IMR-90 (cell line): ENCODE measurements at regions of chr5 and their contacts with region 1.

Region 1: GRCh38 chr5:41869739-41870626 is at the start of gene OXCT1:
- DNase-seq: peak; percentile 80
- ATAC-seq: peak; percentile 91
- H3K4me3 ChIP-seq: peak within 1 kb of the TSS; percentile 95
- H3K27ac ChIP-seq: peak within 1 kb of the TSS; percentile 83
- H3K4me1 ChIP-seq: peaks cover 2% of the 10 kb centered on the region; the same call in 1 of the 2 replicates
- H3K27me3 ChIP-seq: no peaks in the 10 kb centered on the region
- CTCF ChIP-seq: no peak
- POLR2A ChIP-seq: peak; percentile 83
- RAD21 ChIP-seq: no peak
- total RNA-seq, gene OXCT1: 16.3 and 24.7 TPM in 2 replicates

Region 2: GRCh38 chr5:41903892-41904799 is 34.2 kb after region 1 on chr5 and contains the start of gene RIMOC1:
- CTCF ChIA-PET with region 1: no interaction called
- POLR2A ChIA-PET with region 1: no interaction called
- dilution Hi-C with region 1: no loop called
- in situ Hi-C with region 1: no loop called
- intact Hi-C with region 1: loop called (anchors 1 kb)
- DNase-seq: peak; percentile 100
- ATAC-seq: peak; percentile 99
- H3K4me3 ChIP-seq: peak within 1 kb of the TSS; percentile 87
- H3K27ac ChIP-seq: peak within 1 kb of the TSS; percentile 90
- H3K4me1 ChIP-seq: no peaks in the 10 kb centered on the region; the same call in 1 of the 2 replicates
- H3K27me3 ChIP-seq: no peaks in the 10 kb centered on the region
- CTCF ChIP-seq: no peak
- POLR2A ChIP-seq: peak; percentile 97
- RAD21 ChIP-seq: no peak
- total RNA-seq, gene RIMOC1: 4.1 and 10.3 TPM in 2 replicates

Region 3: DNA sequence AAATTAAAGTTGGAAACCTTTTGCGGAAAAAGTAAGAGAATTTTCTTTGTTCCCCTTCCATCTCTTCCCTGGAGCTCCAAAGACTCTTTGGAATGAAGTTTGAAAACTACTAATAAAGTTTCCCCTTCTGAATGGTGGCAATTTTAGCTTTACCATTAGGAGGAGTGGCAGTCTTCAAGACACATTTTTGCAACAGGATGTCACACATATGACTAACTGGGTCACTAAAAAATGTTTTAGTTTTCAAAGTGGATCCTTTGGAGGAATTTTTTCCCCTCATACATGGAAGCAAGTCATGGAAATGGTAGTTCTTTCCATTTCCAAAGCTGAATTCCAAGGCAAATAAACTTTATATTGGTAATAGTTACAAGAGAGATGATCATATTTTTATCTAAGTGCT is 70.7 kb after region 1 on chr5:
- CTCF ChIA-PET with region 1: no interaction called
- POLR2A ChIA-PET with region 1: no interaction called
- dilution Hi-C with region 1: no loop called
- in situ Hi-C with region 1: no loop called
- intact Hi-C with region 1: no loop called
- DNase-seq: no peak
- ATAC-seq: no peak
- H3K4me3 ChIP-seq: no peak overlapping the region
- H3K27ac ChIP-seq: no peak overlapping the region
- H3K4me1 ChIP-seq: no peaks in the 10 kb centered on the region
- H3K27me3 ChIP-seq: no peaks in the 10 kb centered on the region
- CTCF ChIP-seq: no peak
- POLR2A ChIP-seq: no peak
- RAD21 ChIP-seq: no peak

Region 4: GRCh38 chr5:42043400-42043799 is 173.4 kb after region 1 on chr5:
- CTCF ChIA-PET with region 1: no interaction called
- POLR2A ChIA-PET with region 1: no interaction called
- dilution Hi-C with region 1: no loop called
- in situ Hi-C with region 1: no loop called
- intact Hi-C with region 1: loop called (anchors 5 kb)
- DNase-seq: no peak
- ATAC-seq: no peak
- H3K4me3 ChIP-seq: no peak overlapping the region
- H3K27ac ChIP-seq: no peak overlapping the region
- H3K4me1 ChIP-seq: no peaks in the 10 kb centered on the region
- H3K27me3 ChIP-seq: no peaks in the 10 kb centered on the region
- CTCF ChIP-seq: no peak
- POLR2A ChIP-seq: no peak
- RAD21 ChIP-seq: no peak

Region 5: DNA sequence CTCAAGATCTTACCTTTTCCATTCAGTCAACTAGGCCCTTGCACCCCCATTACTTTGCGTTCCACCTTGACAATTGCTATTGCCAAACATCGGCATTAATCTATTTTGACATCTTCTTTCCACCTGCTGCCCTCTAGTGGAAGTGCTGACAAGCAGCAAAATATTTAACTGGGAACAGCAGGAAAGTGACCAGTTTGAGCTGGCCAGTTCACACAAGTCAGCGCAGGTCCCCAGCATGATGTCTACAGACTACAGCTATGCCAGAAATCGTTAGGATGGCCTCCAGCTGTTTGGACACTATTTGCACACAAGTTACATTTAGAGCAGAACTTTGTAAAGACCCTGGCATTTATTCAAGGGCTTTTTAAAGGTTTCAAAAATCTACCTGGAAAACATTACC is 713.3 kb after region 1 on chr5:
- CTCF ChIA-PET with region 1: no interaction called
- POLR2A ChIA-PET with region 1: no interaction called
- dilution Hi-C with region 1: no loop called
- in situ Hi-C with region 1: loop called (anchors 25 kb)
- intact Hi-C with region 1: no loop called
- DNase-seq: peak; percentile 38
- ATAC-seq: peak; percentile 48; the same call in 1 of the 2 replicates
- H3K4me3 ChIP-seq: no peak overlapping the region
- H3K27ac ChIP-seq: no peak overlapping the region
- H3K4me1 ChIP-seq: no peaks in the 10 kb centered on the region
- H3K27me3 ChIP-seq: no peaks in the 10 kb centered on the region
- CTCF ChIP-seq: peak; percentile 67
- POLR2A ChIP-seq: no peak
- RAD21 ChIP-seq: peak; percentile 49

Region 6: DNA sequence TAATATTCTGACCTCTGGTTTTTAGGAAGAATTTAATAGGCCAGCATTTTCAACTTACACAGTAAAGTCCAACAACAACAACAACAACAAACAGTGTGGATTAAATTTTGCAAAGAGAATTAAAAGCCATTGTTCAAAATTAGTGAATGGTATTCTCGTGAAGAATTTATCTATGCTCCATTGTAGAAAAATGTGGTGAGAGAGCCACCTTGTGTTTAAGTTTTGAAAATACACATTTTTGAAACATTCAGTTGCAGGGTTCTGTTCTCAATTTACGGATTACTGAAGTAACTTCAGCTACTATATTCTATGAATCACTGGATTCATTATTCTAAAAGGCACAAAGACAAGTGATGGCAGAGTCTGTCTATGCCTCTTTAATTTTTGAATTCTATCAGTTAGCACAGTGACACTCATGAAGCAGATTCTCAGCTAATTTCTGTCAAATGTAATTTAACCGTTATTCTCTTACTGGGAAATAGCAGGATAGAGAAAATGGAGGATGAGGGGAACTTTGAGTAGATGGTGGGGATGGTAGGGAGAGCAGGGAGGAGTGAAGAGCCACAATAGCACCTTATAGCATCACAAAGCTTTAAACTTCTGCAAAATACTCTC is 897.6 kb after region 1 on chr5:
- CTCF ChIA-PET with region 1: interaction called, 3 read pairs
- POLR2A ChIA-PET with region 1: no interaction called
- dilution Hi-C with region 1: no loop called
- in situ Hi-C with region 1: loop called (anchors 25 kb)
- intact Hi-C with region 1: no loop called
- DNase-seq: peak; percentile 13
- ATAC-seq: peak; percentile 61; the same call in 1 of the 2 replicates
- H3K4me3 ChIP-seq: no peak overlapping the region
- H3K27ac ChIP-seq: no peak overlapping the region
- H3K4me1 ChIP-seq: no peaks in the 10 kb centered on the region
- H3K27me3 ChIP-seq: no peaks in the 10 kb centered on the region
- CTCF ChIP-seq: peak; percentile 53
- POLR2A ChIP-seq: no peak
- RAD21 ChIP-seq: peak; percentile 50